PC-9 (cell line): ENCODE measurements at regions of chr2 and their contacts with region 1.

Region 1: DNA sequence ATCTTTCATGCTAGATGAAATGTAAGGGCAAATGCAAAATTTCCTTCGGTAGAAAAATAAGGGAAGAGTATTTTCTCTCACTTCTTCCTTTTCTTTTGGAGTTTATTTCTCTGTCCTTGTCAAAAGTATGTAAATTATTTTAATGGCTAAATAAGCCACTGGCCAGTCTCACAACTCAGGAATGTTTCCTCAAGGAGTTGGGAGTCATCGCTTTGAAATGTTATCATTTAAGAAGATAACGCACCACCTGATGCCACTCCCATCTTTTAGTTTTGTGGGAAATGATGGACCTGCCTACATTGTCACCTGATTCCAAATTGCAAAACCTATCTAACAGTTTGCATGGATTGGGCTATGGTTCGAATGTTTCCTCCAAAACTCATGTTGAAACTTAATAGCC is 32.5 kb upstream of the PPM1B start:
- DNase-seq: peak; percentile 37 to 97
- H3K4me3 ChIP-seq: peak overlapping the region; percentile 3; the same call in 1 of the 2 replicates
- H3K27ac ChIP-seq: peak overlapping the region; percentile 63
- H3K4me1 ChIP-seq: peaks cover 28% of the 10 kb centered on the region
- H3K27me3 ChIP-seq: no peaks in the 10 kb centered on the region
- CTCF ChIP-seq: no peak

Region 2: DNA sequence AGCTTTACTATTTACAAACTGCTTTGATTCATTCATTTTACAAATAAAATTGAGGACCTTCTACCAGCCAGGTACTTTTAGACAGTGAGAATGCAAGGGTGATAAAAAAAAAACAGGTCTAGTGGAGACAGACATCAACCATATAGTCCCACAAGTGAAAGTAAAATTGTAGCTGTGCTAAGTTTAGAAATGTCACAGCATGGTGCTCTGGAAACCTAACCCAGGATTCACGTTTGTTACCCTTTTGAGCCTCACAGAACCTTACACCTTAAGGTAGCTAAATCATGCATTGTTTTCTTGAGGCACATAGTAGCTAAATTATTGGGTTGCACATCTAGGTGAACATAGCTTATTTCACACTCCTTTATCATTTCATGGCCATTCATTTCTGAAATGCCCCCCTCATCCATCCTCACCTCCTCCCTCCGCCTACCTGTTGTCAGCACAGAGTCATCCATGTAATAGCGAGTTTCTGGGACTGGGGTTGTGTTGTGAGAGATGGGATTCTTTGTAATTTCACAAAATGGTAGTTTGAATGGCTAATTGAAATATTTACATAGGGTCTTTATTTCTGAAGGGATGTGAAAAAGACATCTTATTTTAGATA is 1560.6 kb before region 1 on chr2:
- CTCF ChIA-PET with region 1: no interaction called
- POLR2A ChIA-PET with region 1: interaction called, 15 read pairs
- intact Hi-C with region 1: no loop called
- DNase-seq: no peak
- H3K4me3 ChIP-seq: no peak overlapping the region
- H3K27ac ChIP-seq: no peak overlapping the region
- H3K4me1 ChIP-seq: peaks cover 9% of the 10 kb centered on the region; the same call in 1 of the 2 replicates
- H3K27me3 ChIP-seq: no peaks in the 10 kb centered on the region
- CTCF ChIP-seq: no peak

Region 3: DNA sequence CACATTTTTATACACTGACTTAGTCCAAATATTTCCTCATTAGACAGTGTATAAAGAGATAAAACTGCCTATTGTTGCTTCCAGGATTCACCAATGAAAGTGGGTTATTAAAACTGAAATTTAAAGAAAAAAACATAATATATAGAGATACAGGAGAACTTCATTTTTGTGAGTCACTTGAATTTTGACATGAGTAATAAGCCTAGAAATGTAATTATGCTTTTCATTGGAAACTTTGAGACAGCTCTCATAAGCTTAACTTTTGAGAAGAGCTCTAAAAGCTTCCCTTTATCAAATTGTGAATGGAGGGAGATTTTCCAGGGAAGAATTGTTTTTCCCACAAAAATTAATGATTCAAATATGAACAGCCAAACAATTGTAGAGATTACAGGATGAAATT is 348.3 kb before region 1 on chr2:
- CTCF ChIA-PET with region 1: no interaction called
- POLR2A ChIA-PET with region 1: no interaction called
- intact Hi-C with region 1: no loop called
- DNase-seq: no peak
- H3K4me3 ChIP-seq: no peak overlapping the region
- H3K27ac ChIP-seq: no peak overlapping the region
- H3K4me1 ChIP-seq: no peaks in the 10 kb centered on the region
- H3K27me3 ChIP-seq: no peaks in the 10 kb centered on the region
- CTCF ChIP-seq: no peak

Region 4: GRCh38 chr2:44107085-44107740 is 29.0 kb before region 1 on chr2:
- CTCF ChIA-PET with region 1: no interaction called
- POLR2A ChIA-PET with region 1: no interaction called
- intact Hi-C with region 1: no loop called
- DNase-seq: peak in 1 of 2 experiments; percentile 8
- H3K4me3 ChIP-seq: no peak overlapping the region
- H3K27ac ChIP-seq: no peak overlapping the region
- H3K4me1 ChIP-seq: peaks cover 11% of the 10 kb centered on the region
- H3K27me3 ChIP-seq: no peaks in the 10 kb centered on the region
- CTCF ChIP-seq: no peak

Region 5: DNA sequence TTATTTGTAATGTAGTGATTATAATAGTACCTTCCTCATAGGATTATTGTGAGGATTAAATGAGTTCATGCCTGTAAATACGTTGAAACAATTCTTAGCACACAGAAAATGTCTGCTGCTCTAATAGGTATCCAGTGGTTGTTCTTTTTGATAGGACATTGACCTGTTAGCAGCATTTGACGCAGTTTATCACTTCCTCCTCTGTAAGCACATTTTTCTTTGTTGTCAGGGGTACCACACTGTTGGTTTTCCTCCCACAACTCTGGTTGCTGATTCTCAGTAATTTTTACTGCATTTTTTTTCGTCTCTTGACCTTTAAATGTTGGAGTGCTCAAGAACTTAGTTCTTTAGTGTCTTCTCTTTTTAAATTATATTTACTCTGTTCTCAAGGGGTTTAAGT is 47.9 kb after region 1 on chr2:
- CTCF ChIA-PET with region 1: no interaction called
- POLR2A ChIA-PET with region 1: interaction called, 16 read pairs
- intact Hi-C with region 1: no loop called
- DNase-seq: no peak
- H3K4me3 ChIP-seq: no peak overlapping the region
- H3K27ac ChIP-seq: no peak overlapping the region
- H3K4me1 ChIP-seq: no peaks in the 10 kb centered on the region
- H3K27me3 ChIP-seq: no peaks in the 10 kb centered on the region
- CTCF ChIP-seq: no peak